Activated CD4-positive, alpha-beta memory T cell treated with anti-CD3 and anti-CD28 coated beads for 36 hours (primary cell): ENCODE measurements at regions of chr18 and their contacts with region 1.

Region 1: DNA sequence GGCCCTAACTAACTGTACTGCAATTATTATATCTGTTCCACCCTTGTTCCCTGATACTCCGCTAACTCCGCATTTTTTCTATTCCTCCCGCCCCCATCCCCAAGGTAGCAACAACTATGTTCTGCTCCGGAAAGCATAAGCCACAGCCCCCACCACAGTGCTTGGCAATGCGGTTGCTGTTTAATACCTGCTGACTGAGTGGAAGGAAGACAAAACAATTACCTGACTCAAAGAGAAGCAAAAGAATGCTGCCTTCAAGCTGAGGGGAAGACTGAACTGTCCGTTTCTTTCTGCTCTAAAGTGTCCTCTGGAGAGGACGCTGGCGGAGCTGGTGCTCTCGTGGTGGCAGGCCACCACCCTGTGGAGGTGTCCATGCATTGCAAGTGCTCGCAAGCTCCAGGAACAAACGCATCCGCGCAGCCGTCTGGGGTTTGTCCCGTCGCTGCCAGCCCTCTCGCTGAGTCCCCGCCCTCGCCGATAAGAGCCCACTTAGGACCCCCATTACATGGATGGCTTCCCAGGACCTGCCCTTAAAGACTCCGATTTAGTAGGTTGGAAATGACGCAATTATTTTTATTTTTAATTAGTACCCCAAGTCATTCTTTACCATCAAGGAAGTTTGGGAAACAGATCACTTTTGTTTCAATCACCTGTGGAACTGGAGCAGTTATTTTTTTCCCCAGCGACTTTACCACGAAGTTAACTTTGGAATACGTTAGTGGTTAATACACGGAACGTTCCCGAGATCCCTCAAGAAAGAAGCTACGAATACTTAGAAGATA is 1.6 kb upstream of the MYL12A start:
- DNase-seq: peak; percentile 91
- H3K4me3 Mint-ChIP-seq: peak overlapping the region; percentile 97
- H3K27ac Mint-ChIP-seq: peak overlapping the region; percentile 98
- H3K4me1 Mint-ChIP-seq: peaks cover 23% of the 10 kb centered on the region
- H3K27me3 Mint-ChIP-seq: no peaks in the 10 kb centered on the region

Region 2: DNA sequence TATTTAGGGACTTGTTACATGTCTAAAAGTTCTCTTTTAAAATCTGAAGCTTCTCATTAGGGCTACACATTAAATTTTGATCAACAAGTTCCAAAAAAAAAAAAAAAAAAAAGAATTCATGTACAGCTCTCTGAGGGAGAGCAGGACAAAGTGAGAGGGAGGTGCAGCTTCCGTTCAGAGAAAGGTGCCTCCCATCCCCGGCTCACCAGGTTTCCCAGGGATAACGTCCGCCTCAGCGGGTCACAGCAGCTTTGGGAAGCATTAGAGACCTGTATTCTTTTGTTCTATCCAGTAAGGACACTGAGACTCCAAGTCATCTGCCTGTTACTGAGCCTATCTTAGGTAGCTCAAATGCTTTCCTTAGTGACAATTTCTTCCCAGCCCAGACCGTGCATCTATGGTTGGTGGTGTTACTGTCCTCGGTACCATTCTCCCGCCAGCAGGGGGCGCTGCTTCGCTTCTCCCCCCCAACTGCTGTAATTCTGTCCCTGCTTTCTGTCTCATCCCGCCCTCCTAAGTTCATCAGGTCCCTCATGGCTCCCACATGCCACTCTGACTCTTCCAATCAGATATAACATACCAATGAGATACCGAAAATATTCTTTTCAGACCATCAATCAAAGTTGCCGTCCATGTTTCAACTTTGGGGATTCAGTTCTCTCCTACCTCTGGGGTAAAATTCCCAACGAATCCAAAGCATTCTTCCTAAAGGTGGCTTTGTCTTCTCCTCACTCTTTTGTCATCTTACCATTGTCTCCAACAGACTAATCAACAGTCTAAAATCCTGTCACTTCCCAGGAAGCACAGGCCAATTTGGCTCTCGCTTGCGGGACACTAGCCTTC is 1141.2 kb before region 1 on chr18:
- CTCF ChIA-PET with region 1: no interaction called
- POLR2A ChIA-PET with region 1: no interaction called
- intact Hi-C with region 1: loop called (anchors 10 kb)
- DNase-seq: peak; percentile 63
- H3K4me3 Mint-ChIP-seq: no peak overlapping the region
- H3K27ac Mint-ChIP-seq: no peak overlapping the region
- H3K4me1 Mint-ChIP-seq: no peaks in the 10 kb centered on the region
- H3K27me3 Mint-ChIP-seq: peaks cover 3% of the 10 kb centered on the region

Region 3: DNA sequence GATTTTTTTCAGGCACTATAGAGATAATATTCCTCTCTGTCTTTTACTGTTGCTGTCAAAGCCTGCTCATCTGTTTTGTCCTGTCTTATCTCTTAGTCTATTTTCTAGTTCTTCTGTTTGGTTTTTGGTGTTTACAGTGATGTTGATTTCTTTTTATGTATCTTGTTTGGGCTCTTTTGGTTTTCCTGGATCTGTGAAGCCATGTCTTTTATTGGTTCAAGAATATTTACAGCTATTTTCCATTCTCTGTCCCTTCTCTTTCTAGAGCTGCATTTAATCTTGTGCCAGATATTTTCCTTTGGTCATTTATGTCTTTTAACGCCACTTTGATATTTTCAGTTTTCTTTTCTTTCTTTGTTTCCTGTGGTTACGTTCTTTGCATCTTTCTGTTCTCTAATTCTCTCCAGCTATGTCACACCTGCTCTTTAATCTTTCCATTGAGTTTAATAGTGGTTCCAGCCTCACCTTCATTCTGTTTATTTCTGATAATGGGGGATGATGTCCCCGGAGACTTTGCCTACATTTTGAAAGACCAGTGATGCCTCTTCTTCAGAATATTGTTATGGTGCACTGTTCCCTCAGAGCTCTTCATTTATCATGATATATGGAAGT is 558.5 kb before region 1 on chr18:
- CTCF ChIA-PET with region 1: no interaction called
- POLR2A ChIA-PET with region 1: no interaction called
- intact Hi-C with region 1: loop called (anchors 1 kb)
- DNase-seq: no peak
- H3K4me3 Mint-ChIP-seq: peak overlapping the region; percentile 7
- H3K27ac Mint-ChIP-seq: peak overlapping the region; percentile 66
- H3K4me1 Mint-ChIP-seq: peaks cover 69% of the 10 kb centered on the region
- H3K27me3 Mint-ChIP-seq: no peaks in the 10 kb centered on the region

Region 4: DNA sequence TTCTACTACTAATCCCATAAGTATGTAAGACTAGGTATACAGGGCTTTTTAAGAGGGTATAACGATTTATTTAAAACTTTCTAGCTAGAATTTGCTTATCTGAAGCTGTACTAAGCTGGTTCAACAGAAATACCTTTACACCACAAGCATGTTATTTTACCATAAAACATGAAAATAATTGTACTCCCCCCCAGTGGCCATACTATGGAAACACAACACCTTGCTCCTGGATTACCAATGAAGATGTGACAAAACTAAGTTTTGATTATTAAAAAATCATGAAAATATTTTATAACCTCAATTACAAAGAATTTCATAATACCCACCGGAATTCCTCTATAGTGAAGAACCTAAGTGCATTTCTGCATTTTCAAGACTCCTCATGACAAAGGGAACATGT is 260.4 kb before region 1 on chr18:
- CTCF ChIA-PET with region 1: interaction called, 39 read pairs
- POLR2A ChIA-PET with region 1: no interaction called
- intact Hi-C with region 1: loop called (anchors 2 kb)
- DNase-seq: no peak
- H3K4me3 Mint-ChIP-seq: no peak overlapping the region
- H3K27ac Mint-ChIP-seq: peak overlapping the region; percentile 58
- H3K4me1 Mint-ChIP-seq: peaks cover 74% of the 10 kb centered on the region
- H3K27me3 Mint-ChIP-seq: no peaks in the 10 kb centered on the region

Region 5: GRCh38 chr18:3129053-3129864 is 116.8 kb before region 1 on chr18:
- CTCF ChIA-PET with region 1: interaction called, 13 read pairs
- POLR2A ChIA-PET with region 1: no interaction called
- intact Hi-C with region 1: no loop called
- DNase-seq: peak; percentile 90
- H3K4me3 Mint-ChIP-seq: no peak overlapping the region
- H3K27ac Mint-ChIP-seq: no peak overlapping the region
- H3K4me1 Mint-ChIP-seq: peaks cover 13% of the 10 kb centered on the region
- H3K27me3 Mint-ChIP-seq: no peaks in the 10 kb centered on the region

Region 6: GRCh38 chr18:3223356-3223755 is 22.7 kb before region 1 on chr18:
- CTCF ChIA-PET with region 1: interaction called, 13 read pairs
- POLR2A ChIA-PET with region 1: no interaction called
- intact Hi-C with region 1: no loop called
- DNase-seq: no peak
- H3K4me3 Mint-ChIP-seq: no peak overlapping the region
- H3K27ac Mint-ChIP-seq: no peak overlapping the region
- H3K4me1 Mint-ChIP-seq: peaks cover 11% of the 10 kb centered on the region
- H3K27me3 Mint-ChIP-seq: no peaks in the 10 kb centered on the region

Region 7: DNA sequence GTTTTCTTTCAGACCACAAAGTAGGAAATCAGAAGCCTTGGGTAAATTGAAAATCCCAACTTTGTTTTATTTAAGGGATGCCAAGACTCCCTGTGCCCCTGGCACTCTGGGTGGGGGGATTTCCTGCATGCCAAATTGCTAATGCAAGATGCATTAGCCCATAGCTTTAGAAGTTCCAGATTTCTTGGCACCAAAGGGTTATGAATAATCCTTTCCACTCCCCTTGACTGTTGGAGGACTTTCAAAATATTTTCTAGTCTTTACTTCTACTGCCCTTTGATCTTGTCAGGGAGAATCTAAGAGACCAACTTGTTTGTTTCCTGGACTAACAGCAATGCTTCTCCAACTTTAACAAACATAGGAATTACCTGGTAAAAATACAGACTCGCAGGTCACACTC is 122.1 kb after region 1 on chr18:
- CTCF ChIA-PET with region 1: no interaction called
- POLR2A ChIA-PET with region 1: no interaction called
- intact Hi-C with region 1: no loop called
- DNase-seq: no peak
- H3K4me3 Mint-ChIP-seq: no peak overlapping the region
- H3K27ac Mint-ChIP-seq: no peak overlapping the region
- H3K4me1 Mint-ChIP-seq: no peaks in the 10 kb centered on the region
- H3K27me3 Mint-ChIP-seq: peaks cover 5% of the 10 kb centered on the region

Region 8: DNA sequence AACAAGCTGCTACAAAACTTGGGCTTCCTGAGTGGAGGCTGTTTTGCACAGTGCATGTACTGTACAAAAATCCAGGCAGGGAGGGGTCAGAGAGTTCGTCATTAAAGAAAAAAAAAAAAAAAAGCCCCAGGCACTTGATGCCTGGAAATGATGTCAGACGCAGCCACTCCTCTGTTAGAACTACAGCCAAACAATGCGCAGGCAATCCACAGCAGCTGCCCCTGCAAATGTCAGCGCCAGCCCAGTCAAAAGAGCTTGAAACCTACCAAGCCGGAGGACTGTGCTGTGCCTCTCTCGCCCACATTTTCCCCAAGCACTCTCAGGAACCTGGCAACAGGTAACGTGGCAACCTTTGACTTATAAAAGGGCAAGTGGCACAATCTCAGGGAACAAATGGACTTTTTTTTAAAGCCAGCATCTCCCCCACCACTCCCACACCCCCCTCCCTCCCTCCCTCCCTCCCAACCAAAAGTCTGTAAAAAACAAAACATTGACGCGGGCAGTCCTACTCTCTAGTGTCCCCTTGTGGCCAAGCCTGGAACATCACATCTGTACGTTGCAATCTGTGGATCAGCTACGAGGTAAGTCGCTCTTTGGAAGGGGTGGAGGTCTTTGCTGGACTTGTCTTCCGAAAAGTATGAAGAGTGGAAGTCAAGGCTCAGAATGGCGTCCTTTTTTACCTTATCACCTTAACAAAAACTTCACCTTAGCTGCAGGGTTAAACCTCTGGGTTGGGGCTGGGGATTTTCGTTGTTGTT is 348.0 kb after region 1 on chr18:
- CTCF ChIA-PET with region 1: interaction called, 3 read pairs
- POLR2A ChIA-PET with region 1: no interaction called
- intact Hi-C with region 1: loop called (anchors 1 kb)
- DNase-seq: peak; percentile 93
- H3K4me3 Mint-ChIP-seq: peak overlapping the region; percentile 93
- H3K27ac Mint-ChIP-seq: peak overlapping the region; percentile 100
- H3K4me1 Mint-ChIP-seq: peaks cover 52% of the 10 kb centered on the region
- H3K27me3 Mint-ChIP-seq: no peaks in the 10 kb centered on the region

Region 9: DNA sequence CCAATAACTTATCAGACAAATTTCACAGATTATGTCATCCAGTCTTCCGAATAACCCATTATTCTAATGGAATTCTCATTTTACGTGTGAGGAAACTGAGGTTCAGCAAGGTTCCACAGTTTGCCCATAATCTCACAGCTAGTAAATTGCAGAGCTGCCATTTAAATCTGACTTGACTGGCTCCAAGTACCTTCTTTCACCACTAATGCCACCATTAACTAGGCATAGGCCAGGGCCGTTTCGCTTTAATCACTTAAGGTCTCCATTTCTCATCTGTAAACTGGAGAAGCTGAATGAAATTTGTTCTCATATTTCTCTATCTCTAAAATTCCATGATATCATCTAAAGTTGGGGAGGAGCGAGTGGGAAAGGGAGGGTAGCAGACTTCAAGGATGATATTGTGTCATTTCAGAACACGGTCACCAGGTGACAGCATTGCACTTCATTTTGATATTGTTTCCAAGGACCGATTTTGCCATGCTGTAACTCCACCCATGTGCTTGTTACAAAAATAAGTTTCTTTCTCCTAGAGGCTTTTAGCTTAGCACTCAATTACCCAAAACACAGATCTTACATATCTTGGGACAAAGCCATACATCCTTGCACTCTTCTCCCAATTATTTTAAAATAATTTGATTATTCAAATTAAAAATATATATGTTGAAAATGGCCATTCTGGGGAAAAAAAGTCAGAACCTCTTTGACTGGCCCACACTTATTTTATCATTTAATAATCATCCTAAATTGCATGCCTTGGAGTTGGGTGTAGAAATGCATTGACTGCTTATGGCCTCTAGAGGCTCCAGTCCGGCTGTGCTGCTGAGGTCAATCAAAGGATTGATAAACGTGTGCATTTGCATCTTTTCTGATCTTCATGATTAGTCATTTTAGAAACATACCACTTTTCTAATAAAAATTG is 1827.2 kb after region 1 on chr18:
- CTCF ChIA-PET with region 1: no interaction called
- POLR2A ChIA-PET with region 1: no interaction called
- intact Hi-C with region 1: no loop called
- DNase-seq: no peak
- H3K4me3 Mint-ChIP-seq: no peak overlapping the region
- H3K27ac Mint-ChIP-seq: no peak overlapping the region
- H3K4me1 Mint-ChIP-seq: no peaks in the 10 kb centered on the region
- H3K27me3 Mint-ChIP-seq: peaks cover 7% of the 10 kb centered on the region